Activated T-helper 1 cell treated with anti-CD3 and anti-CD28 coated beads, Interleukin-12 subunit alpha, Interleukin-12 subunit beta, Interleukin-2, Interleukin-4 antibody, amounts not matched to agents 30 ng/mL and 10 ng/mL and 1 ng/mL, durations not matched to agents 14 hours and 24 hours and 36 hours (primary cell): ENCODE measurements at regions of chr1 and their contacts with region 1.

Region 1: DNA sequence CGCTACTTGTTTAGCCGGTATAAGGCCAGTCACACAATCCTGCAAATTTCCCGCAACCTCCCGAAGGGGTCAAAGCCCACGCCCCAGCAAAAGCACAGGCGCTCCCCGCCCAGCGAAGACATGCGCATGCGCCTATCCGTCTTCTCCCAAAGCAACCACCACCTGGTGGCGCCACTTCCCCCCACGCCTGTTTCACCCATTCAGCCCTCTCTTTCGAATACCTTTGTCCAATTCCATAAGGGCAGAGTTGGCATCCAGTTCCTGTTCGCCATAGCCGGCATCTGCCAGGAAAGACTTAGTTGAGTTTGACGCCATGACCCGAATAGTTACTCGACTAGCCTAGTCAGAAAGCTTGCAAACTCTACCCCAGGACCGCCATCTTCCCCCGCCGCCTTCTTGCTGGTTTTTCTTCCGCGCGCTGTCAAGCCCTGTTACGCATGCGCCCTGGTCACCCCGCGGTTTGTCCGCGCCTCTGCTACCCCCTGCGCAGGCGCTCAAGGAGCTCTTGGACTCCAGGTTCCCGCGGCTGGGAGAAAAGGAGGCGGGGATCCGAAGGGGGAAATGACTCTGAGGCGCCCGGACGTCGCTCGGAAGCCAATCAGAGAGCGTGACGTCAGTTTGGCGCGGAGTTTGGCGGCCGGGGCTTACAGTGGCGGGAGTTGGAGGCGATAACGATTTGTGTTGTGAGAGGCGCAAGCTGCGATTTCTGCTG is at the starts of genes DTL and INTS7:
- DNase-seq: peak; percentile 99
- H3K4me3 Mint-ChIP-seq: peak within 1 kb of the TSS; percentile 95
- H3K27ac Mint-ChIP-seq: peak within 1 kb of the TSS; percentile 94
- H3K4me1 Mint-ChIP-seq: peaks cover 74% of the 10 kb centered on the region
- H3K27me3 Mint-ChIP-seq: peaks cover 3% of the 10 kb centered on the region
- total RNA-seq, gene DTL: 91.0 and 94.8 TPM in 2 replicates
- total RNA-seq, gene INTS7: 33.2 and 33.8 TPM in 2 replicates

Region 2: GRCh38 chr1:211675230-211676105 is 359.8 kb before region 1 on chr1 and contains the start of gene NEK2:
- intact Hi-C with region 1: loop called (anchors 1 kb)
- DNase-seq: peak; percentile 87
- H3K4me3 Mint-ChIP-seq: peak within 1 kb of the TSS; percentile 95
- H3K27ac Mint-ChIP-seq: peak within 1 kb of the TSS; percentile 80
- H3K4me1 Mint-ChIP-seq: peaks cover 42% of the 10 kb centered on the region
- H3K27me3 Mint-ChIP-seq: no peaks in the 10 kb centered on the region
- total RNA-seq, gene NEK2: 13.9 and 18.9 TPM in 2 replicates

Region 3: GRCh38 chr1:211830330-211831142 is 204.7 kb before region 1 on chr1 and contains the start of gene LPGAT1:
- intact Hi-C with region 1: loop called (anchors 1 kb)
- DNase-seq: peak; percentile 65
- H3K4me3 Mint-ChIP-seq: peak within 1 kb of the TSS; percentile 91
- H3K27ac Mint-ChIP-seq: peak within 1 kb of the TSS; percentile 90
- H3K4me1 Mint-ChIP-seq: peaks cover 69% of the 10 kb centered on the region
- H3K27me3 Mint-ChIP-seq: peaks cover 2% of the 10 kb centered on the region
- total RNA-seq, gene LPGAT1: 35.3 and 35.6 TPM in 2 replicates

Region 4: GRCh38 chr1:212368073-212368484 is 332.8 kb after region 1 on chr1:
- intact Hi-C with region 1: loop called (anchors 1 kb)
- DNase-seq: peak; percentile 48
- H3K4me3 Mint-ChIP-seq: no peak overlapping the region
- H3K27ac Mint-ChIP-seq: no peak overlapping the region
- H3K4me1 Mint-ChIP-seq: no peaks in the 10 kb centered on the region
- H3K27me3 Mint-ChIP-seq: no peaks in the 10 kb centered on the region

Region 5: DNA sequence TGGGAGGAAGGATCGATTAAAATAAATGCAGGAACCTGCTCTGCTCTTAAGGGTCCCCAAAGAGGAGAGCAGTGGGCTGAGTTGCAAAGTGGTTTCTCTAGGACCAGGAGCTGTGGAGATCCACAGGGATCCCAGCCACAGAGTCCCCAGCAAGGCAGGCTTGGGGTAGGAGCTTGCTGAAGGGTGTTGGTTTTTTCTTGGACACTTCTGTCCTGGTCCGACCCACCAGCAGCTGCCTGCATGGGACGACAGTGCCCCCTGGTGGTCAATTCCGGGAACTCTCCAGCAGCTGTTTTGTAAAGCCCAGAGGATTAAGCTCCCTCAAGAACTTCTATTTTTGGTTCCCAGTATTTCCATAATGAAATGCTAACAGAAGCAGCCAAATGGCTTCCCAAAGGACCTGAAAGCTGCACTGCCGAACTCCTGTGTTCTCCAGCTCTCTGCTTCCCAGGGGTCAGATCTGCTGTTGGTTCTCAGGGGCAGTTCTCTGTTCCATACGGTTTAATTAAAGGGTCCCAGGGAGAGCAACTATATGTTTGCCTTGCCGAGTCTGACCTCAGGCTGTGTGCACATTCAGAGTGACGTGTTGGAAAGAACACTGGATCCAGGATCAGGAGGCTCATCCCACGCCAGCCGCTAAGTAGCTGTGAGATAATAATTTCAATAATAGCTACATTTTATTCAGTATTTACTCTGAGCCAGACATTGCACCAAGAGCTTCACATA is 420.7 kb after region 1 on chr1:
- intact Hi-C with region 1: loop called (anchors 1 kb)
- DNase-seq: peak; percentile 73
- H3K4me3 Mint-ChIP-seq: no peak overlapping the region
- H3K27ac Mint-ChIP-seq: no peak overlapping the region
- H3K4me1 Mint-ChIP-seq: peaks cover 12% of the 10 kb centered on the region
- H3K27me3 Mint-ChIP-seq: peaks cover 1% of the 10 kb centered on the region

Region 6: GRCh38 chr1:212791676-212792395 is 756.6 kb after region 1 on chr1 and contains the starts of genes NSL1 and TATDN3:
- intact Hi-C with region 1: loop called (anchors 2 kb)
- DNase-seq: peak; percentile 93
- H3K4me3 Mint-ChIP-seq: peak within 1 kb of the TSS; percentile 99
- H3K27ac Mint-ChIP-seq: peak within 1 kb of the TSS; percentile 98
- H3K4me1 Mint-ChIP-seq: peaks cover 30% of the 10 kb centered on the region
- H3K27me3 Mint-ChIP-seq: no peaks in the 10 kb centered on the region
- total RNA-seq, gene NSL1: 40.2 and 44.7 TPM in 2 replicates
- total RNA-seq, gene TATDN3: 14.4 and 18.5 TPM in 2 replicates